Activated CD4-positive, alpha-beta T cell treated with anti-CD3 and anti-CD28 coated beads, Interleukin-2, amount 10 ng/mL, durations not matched to agents 24 days and 14 days (primary cell): ENCODE measurements at regions of chr15 and their contacts with region 1.

Region 1: GRCh38 chr15:51982013-51982769 is 10.6 kb upstream of the LEO1 start:
- DNase-seq: peak; percentile 89
- H3K4me3 Mint-ChIP-seq: peak overlapping the region; percentile 83
- H3K27ac Mint-ChIP-seq: peak overlapping the region; percentile 93
- H3K4me1 Mint-ChIP-seq: peaks cover 12% of the 10 kb centered on the region
- H3K27me3 Mint-ChIP-seq: no peaks in the 10 kb centered on the region

Region 2: GRCh38 chr15:51965691-51966090 is 16.5 kb before region 1 on chr15:
- intact Hi-C with region 1: no loop called
- DNase-seq: no peak
- H3K4me3 Mint-ChIP-seq: no peak overlapping the region
- H3K27ac Mint-ChIP-seq: no peak overlapping the region
- H3K4me1 Mint-ChIP-seq: peaks cover 22% of the 10 kb centered on the region
- H3K27me3 Mint-ChIP-seq: no peaks in the 10 kb centered on the region

Region 3: GRCh38 chr15:52005748-52006701 is 23.8 kb after region 1 on chr15:
- intact Hi-C with region 1: loop called (anchors 1 kb)
- DNase-seq: peak; percentile 73
- H3K4me3 Mint-ChIP-seq: peak overlapping the region; percentile 51
- H3K27ac Mint-ChIP-seq: peak overlapping the region; percentile 82
- H3K4me1 Mint-ChIP-seq: peaks cover 57% of the 10 kb centered on the region
- H3K27me3 Mint-ChIP-seq: no peaks in the 10 kb centered on the region

Region 4: GRCh38 chr15:52039925-52040781 is 58.0 kb after region 1 on chr15:
- intact Hi-C with region 1: loop called (anchors 5 kb)
- DNase-seq: no peak
- H3K4me3 Mint-ChIP-seq: no peak overlapping the region
- H3K27ac Mint-ChIP-seq: no peak overlapping the region
- H3K4me1 Mint-ChIP-seq: peaks cover 32% of the 10 kb centered on the region
- H3K27me3 Mint-ChIP-seq: no peaks in the 10 kb centered on the region

Region 5: GRCh38 chr15:52139599-52140491 is 157.7 kb after region 1 on chr15:
- intact Hi-C with region 1: loop called (anchors 1 kb)
- DNase-seq: peak; percentile 90
- H3K4me3 Mint-ChIP-seq: no peak overlapping the region
- H3K27ac Mint-ChIP-seq: peak overlapping the region; percentile 41
- H3K4me1 Mint-ChIP-seq: peaks cover 5% of the 10 kb centered on the region
- H3K27me3 Mint-ChIP-seq: no peaks in the 10 kb centered on the region

Region 6: GRCh38 chr15:52735231-52736089 is 753.3 kb after region 1 on chr15:
- intact Hi-C with region 1: loop called (anchors 10 kb)
- DNase-seq: peak; percentile 94
- H3K4me3 Mint-ChIP-seq: no peak overlapping the region
- H3K27ac Mint-ChIP-seq: peak overlapping the region; percentile 18
- H3K4me1 Mint-ChIP-seq: peaks cover 17% of the 10 kb centered on the region
- H3K27me3 Mint-ChIP-seq: peaks cover 8% of the 10 kb centered on the region